A673 (cell line): ENCODE measurements at regions of chr12 and their contacts with region 1.

Region 1: DNA sequence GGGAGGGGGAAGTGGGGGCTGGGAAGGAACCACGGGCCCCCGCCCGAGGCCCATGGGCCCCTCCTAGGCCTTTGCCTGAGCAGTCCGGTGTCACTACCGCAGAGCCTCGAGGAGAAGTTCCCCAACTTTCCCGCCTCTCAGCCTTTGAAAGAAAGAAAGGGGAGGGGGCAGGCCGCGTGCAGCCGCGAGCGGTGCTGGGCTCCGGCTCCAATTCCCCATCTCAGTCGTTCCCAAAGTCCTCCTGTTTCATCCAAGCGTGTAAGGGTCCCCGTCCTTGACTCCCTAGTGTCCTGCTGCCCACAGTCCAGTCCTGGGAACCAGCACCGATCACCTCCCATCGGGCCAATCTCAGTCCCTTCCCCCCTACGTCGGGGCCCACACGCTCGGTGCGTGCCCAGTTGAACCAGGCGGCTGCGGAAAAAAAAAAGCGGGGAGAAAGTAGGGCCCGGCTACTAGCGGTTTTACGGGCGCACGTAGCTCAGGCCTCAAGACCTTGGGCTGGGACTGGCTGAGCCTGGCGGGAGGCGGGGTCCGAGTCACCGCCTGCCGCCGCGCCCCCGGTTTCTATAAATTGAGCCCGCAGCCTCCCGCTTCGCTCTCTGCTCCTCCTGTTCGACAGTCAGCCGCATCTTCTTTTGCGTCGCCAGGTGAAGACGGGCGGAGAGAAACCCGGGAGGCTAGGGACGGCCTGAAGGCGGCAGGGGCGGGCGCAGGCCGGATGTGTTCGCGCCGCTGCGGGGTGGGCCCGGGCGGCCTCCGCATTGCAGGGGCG is at the start of gene GAPDH:
- DNase-seq: peak; percentile 99
- H3K4me3 ChIP-seq: peak within 1 kb of the TSS; percentile 84
- H3K27ac ChIP-seq: peak within 1 kb of the TSS; percentile 96
- H3K4me1 ChIP-seq: peaks cover 40% of the 10 kb centered on the region
- H3K27me3 ChIP-seq: no peaks in the 10 kb centered on the region
- CTCF ChIP-seq: no peak
- total RNA-seq, gene GAPDH: 5,579 and 5,657 TPM in 2 replicates

Region 2: GRCh38 chr12:6323340-6323994 is 210.6 kb before region 1 on chr12:
- CTCF ChIA-PET with region 1: interaction called, 3 read pairs
- POLR2A ChIA-PET with region 1: interaction called, 3 read pairs
- intact Hi-C with region 1: loop called (anchors 5 kb)
- DNase-seq: peak; percentile 98
- H3K4me3 ChIP-seq: no peak overlapping the region
- H3K27ac ChIP-seq: peak overlapping the region; percentile 82
- H3K4me1 ChIP-seq: peaks cover 28% of the 10 kb centered on the region
- H3K27me3 ChIP-seq: no peaks in the 10 kb centered on the region
- CTCF ChIP-seq: peak; percentile 59

Region 3: DNA sequence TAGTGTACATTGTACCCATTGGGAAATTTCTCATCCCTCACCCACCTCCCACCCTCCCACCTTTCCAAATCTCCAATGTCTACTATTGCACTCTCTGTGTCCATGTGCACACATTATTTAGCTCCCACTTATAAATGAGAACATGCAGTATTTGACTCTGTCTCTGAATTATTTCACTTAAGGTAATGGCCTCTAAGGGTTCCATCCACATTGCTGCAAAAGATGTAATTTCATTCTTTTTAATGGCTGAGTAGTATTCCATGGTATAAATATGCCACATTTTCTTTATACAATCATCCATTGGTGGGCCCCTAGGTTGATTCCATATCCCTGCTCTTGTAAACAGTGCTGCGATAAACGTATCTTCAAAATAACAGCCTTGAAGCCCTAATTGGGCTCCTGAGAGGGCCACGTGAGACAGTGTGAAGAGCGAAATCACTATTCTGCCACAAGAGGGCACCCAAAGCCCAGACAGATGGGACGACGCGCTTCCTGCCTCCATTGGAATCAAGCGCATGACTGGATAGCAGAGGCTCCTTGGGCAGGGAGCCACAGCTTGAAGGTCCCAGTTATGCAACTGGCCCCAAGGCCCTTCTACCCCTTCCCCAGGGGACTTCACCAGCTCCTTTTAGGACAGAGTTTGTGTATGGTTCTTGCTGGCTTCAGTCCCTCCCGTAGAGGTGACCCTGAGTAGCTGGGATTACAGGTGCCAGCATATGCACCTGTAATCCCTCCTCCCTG is 110.7 kb before region 1 on chr12:
- CTCF ChIA-PET with region 1: interaction called, 4 read pairs
- POLR2A ChIA-PET with region 1: interaction called, 11 read pairs
- intact Hi-C with region 1: loop called (anchors 2 kb)
- DNase-seq: peak; percentile 96
- H3K4me3 ChIP-seq: no peak overlapping the region
- H3K27ac ChIP-seq: no peak overlapping the region
- H3K4me1 ChIP-seq: no peaks in the 10 kb centered on the region
- H3K27me3 ChIP-seq: no peaks in the 10 kb centered on the region
- CTCF ChIP-seq: peak; percentile 89

Region 4: GRCh38 chr12:6546016-6546415 is 11.9 kb after region 1 on chr12:
- CTCF ChIA-PET with region 1: no interaction called
- POLR2A ChIA-PET with region 1: interaction called, 11 read pairs
- intact Hi-C with region 1: no loop called
- DNase-seq: no peak
- H3K4me3 ChIP-seq: no peak overlapping the region
- H3K27ac ChIP-seq: no peak overlapping the region
- H3K4me1 ChIP-seq: peaks cover 4% of the 10 kb centered on the region
- H3K27me3 ChIP-seq: no peaks in the 10 kb centered on the region
- CTCF ChIP-seq: no peak

Region 5: GRCh38 chr12:6554168-6555017 is 20.3 kb after region 1 on chr12:
- CTCF ChIA-PET with region 1: interaction called, 5 read pairs
- POLR2A ChIA-PET with region 1: interaction called, 10 read pairs
- intact Hi-C with region 1: no loop called
- DNase-seq: peak; percentile 87
- H3K4me3 ChIP-seq: peak overlapping the region; percentile 93
- H3K27ac ChIP-seq: peak overlapping the region; percentile 66
- H3K4me1 ChIP-seq: peaks cover 41% of the 10 kb centered on the region
- H3K27me3 ChIP-seq: no peaks in the 10 kb centered on the region
- CTCF ChIP-seq: peak; percentile 67

Region 6: GRCh38 chr12:6613776-6614512 is 79.8 kb after region 1 on chr12:
- CTCF ChIA-PET with region 1: no interaction called
- POLR2A ChIA-PET with region 1: interaction called, 15 read pairs
- intact Hi-C with region 1: no loop called
- DNase-seq: peak; percentile 91
- H3K4me3 ChIP-seq: no peak overlapping the region
- H3K27ac ChIP-seq: peak overlapping the region; percentile 80
- H3K4me1 ChIP-seq: peaks cover 24% of the 10 kb centered on the region
- H3K27me3 ChIP-seq: no peaks in the 10 kb centered on the region
- CTCF ChIP-seq: 0 out of 2 replicates have a peak, but pooled peaks have one; percentile 10